ENCODE measurements at regions of chr11 and their contacts with region 1.

Region 1: DNA sequence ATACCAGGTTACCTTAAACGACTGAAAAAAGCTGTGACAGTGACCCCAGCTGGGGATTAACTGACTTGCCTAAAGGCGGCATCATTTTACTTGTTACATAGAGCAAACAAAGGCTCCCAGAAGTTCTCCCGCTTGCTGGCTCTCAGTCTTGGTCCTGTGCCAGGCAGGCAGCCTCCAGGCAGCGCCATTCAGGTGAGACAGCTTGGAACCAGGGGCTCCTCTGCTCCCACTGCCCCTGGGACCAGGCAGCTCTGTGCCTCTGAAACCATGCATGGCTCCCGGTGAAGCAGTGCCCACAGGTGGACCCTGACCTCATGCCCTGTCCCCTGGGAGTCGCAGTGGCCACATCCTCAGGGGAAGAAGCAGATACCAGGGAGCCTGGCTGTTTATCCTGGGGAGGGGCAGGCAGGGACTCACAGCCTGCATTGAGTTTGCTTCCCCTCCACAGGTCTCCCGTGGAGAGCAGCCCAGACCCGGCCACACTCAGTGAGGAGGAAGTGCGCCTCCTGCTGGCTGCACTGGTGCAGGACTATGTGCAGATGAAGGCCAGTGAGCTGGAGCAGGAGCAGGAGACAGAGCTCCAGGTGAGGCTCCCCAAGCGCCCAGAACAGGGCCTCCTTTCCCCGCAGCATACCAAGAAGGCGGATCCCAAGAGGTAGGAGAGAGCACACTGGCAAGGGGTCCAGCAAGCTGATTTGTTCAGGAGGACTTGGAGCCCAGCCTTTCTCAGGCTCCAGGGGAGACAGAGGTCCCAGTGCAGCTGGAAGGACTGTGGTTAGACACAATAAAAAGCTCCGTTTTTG is 15.6 kb upstream of the CYP2R1 start:
- DNase-seq: peak; percentile 48 to 87 (median 60)
- ATAC-seq: peak; percentile 99
- H3K4me3 ChIP-seq: no peak overlapping the region
- H3K27ac ChIP-seq: no peak overlapping the region; the same call in 2 of the 3 replicates
- H3K4me1 ChIP-seq: peaks cover 0 to 12% of the 10 kb centered on the region in 2 experiments; a peak in 3 of 5 replicates
- H3K27me3 ChIP-seq: no peaks in the 10 kb centered on the region
- CTCF ChIP-seq: peak; percentile 74 to 92 (median 80)
- EP300 ChIP-seq: no peak
- POLR2A ChIP-seq: no peak
- RAD21 ChIP-seq: peak; percentile 82 to 94

Region 2: GRCh38 chr11:14290422-14290821 is 617.2 kb before region 1 on chr11:
- CTCF ChIA-PET with region 1: no interaction called
- POLR2A ChIA-PET with region 1: no interaction called
- in situ Hi-C with region 1: loop called (anchors 10 kb)
- intact Hi-C with region 1: no loop called
- DNase-seq: peak in 1 of 4 experiments; percentile 19
- ATAC-seq: no peak; the same call in 2 of the 3 replicates
- H3K4me3 ChIP-seq: no peak overlapping the region
- H3K27ac ChIP-seq: no peak overlapping the region
- H3K4me1 ChIP-seq: peaks cover 0 to 2% of the 10 kb centered on the region in 2 experiments; a peak in 1 of 5 replicates
- H3K27me3 ChIP-seq: no peaks in the 10 kb centered on the region
- CTCF ChIP-seq: no peak
- EP300 ChIP-seq: no peak
- POLR2A ChIP-seq: no peak
- RAD21 ChIP-seq: no peak

Region 3: GRCh38 chr11:14619603-14620531 is 287.7 kb before region 1 on chr11:
- CTCF ChIA-PET with region 1: no interaction called
- POLR2A ChIA-PET with region 1: no interaction called
- in situ Hi-C with region 1: no loop called
- intact Hi-C with region 1: loop called (anchors 5 kb)
- DNase-seq: no peak
- ATAC-seq: no peak
- H3K4me3 ChIP-seq: no peak overlapping the region
- H3K27ac ChIP-seq: no peak overlapping the region
- H3K4me1 ChIP-seq: no peaks in the 10 kb centered on the region
- H3K27me3 ChIP-seq: no peaks in the 10 kb centered on the region
- CTCF ChIP-seq: no peak
- EP300 ChIP-seq: no peak
- POLR2A ChIP-seq: no peak
- RAD21 ChIP-seq: no peak

Region 4: GRCh38 chr11:14789879-14790484 is 117.6 kb before region 1 on chr11:
- CTCF ChIA-PET with region 1: interaction called, 49 read pairs
- POLR2A ChIA-PET with region 1: interaction called, 11 read pairs
- in situ Hi-C with region 1: no loop called
- intact Hi-C with region 1: loop called (anchors 1 kb)
- DNase-seq: peak in 1 of 4 experiments; percentile 9
- ATAC-seq: no peak
- H3K4me3 ChIP-seq: no peak overlapping the region
- H3K27ac ChIP-seq: no peak overlapping the region
- H3K4me1 ChIP-seq: no peaks in the 10 kb centered on the region
- H3K27me3 ChIP-seq: no peaks in the 10 kb centered on the region
- CTCF ChIP-seq: peak in 2 of 3 experiments; percentile 34 to 58; a peak in 3 of 6 replicates
- EP300 ChIP-seq: no peak
- POLR2A ChIP-seq: no peak
- RAD21 ChIP-seq: peak; percentile 72 to 76

Region 5: GRCh38 chr11:15074206-15075161 is 166.9 kb after region 1 on chr11:
- CTCF ChIA-PET with region 1: interaction called, 13 read pairs
- POLR2A ChIA-PET with region 1: interaction called, 3 read pairs
- in situ Hi-C with region 1: no loop called
- intact Hi-C with region 1: loop called (anchors 1 kb)
- DNase-seq: peak; percentile 51 to 77 (median 52)
- ATAC-seq: peak; percentile 99
- H3K4me3 ChIP-seq: no peak overlapping the region
- H3K27ac ChIP-seq: no peak overlapping the region
- H3K4me1 ChIP-seq: peaks cover 0 to 11% of the 10 kb centered on the region in 2 experiments; a peak in 2 of 5 replicates
- H3K27me3 ChIP-seq: peaks cover 3 to 31% of the 10 kb centered on the region in 2 experiments; a peak in 4 of 5 replicates
- CTCF ChIP-seq: peak; percentile 76 to 79 (median 78)
- EP300 ChIP-seq: no peak
- POLR2A ChIP-seq: no peak
- RAD21 ChIP-seq: peak; percentile 75 to 81

Measured in K562 (cell line).